Naive thymus-derived CD4-positive, alpha-beta T cell (primary cell): ENCODE measurements at regions of chr6 and their contacts with region 1.

Region 1: DNA sequence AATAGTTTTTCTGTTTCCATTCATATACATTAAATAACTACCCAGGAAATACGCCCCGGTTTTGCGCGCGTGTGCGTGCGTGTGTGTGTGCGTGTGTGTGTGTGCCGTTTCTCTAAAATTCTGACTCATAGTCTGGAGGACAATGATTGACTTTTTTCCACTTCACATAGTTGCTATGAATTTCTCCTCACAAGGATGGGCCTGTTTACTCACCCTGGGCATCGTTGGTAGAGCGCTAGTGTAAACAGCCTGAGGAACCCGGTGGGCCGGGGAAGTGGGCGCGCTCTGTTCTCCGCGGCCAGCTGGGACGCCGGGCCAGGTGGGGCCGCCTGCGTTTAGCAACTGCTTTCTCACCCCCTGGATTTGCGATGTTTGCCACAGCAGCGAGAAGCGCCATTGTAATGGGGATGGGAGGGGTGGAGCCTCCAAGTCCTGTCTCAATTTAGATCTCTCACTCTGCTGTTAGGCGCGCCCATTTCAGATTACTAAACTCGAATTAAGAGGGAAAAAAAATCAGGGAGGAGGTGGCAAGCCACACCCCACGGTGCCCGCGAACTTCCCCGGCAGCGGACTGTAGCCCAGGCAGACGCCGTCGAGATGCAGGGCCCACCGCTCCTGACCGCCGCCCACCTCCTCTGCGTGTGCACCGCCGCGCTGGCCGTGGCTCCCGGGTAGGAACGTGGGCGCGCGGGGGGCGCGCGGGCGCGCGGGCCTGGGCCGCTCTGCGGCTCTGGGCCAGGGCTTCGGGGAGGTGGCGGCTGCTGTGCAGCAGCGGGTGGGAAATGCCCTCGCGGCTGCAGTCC is at the start of gene CD109:
- DNase-seq: peak; percentile 15 to 81 (median 48)
- ATAC-seq: peak; percentile 75
- H3K4me3 ChIP-seq: peak within 1 kb of the TSS; percentile 61
- H3K4me3 Mint-ChIP-seq: peak within 1 kb of the TSS; percentile 84 to 94 (median 90)
- H3K27ac ChIP-seq: peak within 1 kb of the TSS; percentile 49
- H3K27ac Mint-ChIP-seq: peak within 1 kb of the TSS; percentile 23 to 94 (median 87)
- H3K4me1 ChIP-seq: peaks cover 0 to 6% of the 10 kb centered on the region in 2 donors
- H3K4me1 Mint-ChIP-seq: peaks cover 5 to 43% (median 25%) of the 10 kb centered on the region in 7 donors
- H3K27me3 ChIP-seq: no peaks in the 10 kb centered on the region
- H3K27me3 Mint-ChIP-seq: peaks cover 0 to 33% (median 24%) of the 10 kb centered on the region in 5 donors
- total RNA-seq, gene CD109: 0.54 to 12.3 (median 1.2) TPM

Region 2: DNA sequence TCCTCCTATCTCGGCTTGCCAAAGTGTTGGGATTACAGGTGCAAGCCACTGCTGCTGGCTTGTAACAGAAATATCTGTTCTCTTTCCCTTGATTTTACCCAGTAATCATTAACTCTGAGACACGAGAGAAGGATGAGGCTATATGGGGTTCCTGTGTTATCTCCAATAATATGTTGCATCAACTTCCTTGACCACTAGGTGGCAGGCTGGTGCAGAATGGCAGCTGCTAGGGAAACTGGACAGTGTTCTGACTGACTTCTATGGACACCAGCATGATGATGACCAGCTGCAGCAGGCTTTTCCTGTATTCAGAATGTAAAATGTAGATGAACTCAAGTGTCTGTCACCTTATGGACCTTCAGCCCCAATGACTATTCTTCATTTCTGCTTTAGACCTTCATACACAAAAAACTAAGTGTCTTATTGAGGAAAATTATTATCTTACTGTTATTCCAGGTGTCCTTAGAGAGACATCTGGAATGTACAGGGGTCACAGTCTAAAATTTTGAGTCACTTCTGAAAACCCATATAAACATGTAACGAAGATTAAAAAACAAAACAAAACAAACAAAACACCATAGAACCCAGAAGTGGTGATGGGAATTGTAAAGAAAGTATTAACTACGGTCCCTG is 20.2 kb before region 1 on chr6:
- CTCF ChIA-PET with region 1: no interaction called
- POLR2A ChIA-PET with region 1: interaction called, 3 read pairs
- intact Hi-C with region 1: loop called in 1 of 2 experiments (anchors 1 kb)
- DNase-seq: peak; percentile 31 to 74 (median 59)
- ATAC-seq: peak; percentile 92
- H3K4me3 ChIP-seq: no peak overlapping the region
- H3K4me3 Mint-ChIP-seq: no peak overlapping the region
- H3K27ac ChIP-seq: no peak overlapping the region
- H3K27ac Mint-ChIP-seq: no peak overlapping the region
- H3K4me1 ChIP-seq: no peaks in the 10 kb centered on the region
- H3K4me1 Mint-ChIP-seq: peaks cover 0 to 4% (median 0%) of the 10 kb centered on the region in 7 donors
- H3K27me3 ChIP-seq: no peaks in the 10 kb centered on the region
- H3K27me3 Mint-ChIP-seq: peaks cover 4 to 23% (median 21%) of the 10 kb centered on the region in 5 donors

Region 3: GRCh38 chr6:73774311-73774787 is 78.5 kb after region 1 on chr6:
- CTCF ChIA-PET with region 1: no interaction called
- POLR2A ChIA-PET with region 1: no interaction called
- intact Hi-C with region 1: no loop called
- DNase-seq: no peak
- ATAC-seq: no peak
- H3K4me3 ChIP-seq: no peak overlapping the region
- H3K4me3 Mint-ChIP-seq: no peak overlapping the region
- H3K27ac ChIP-seq: no peak overlapping the region
- H3K27ac Mint-ChIP-seq: no peak overlapping the region
- H3K4me1 ChIP-seq: no peaks in the 10 kb centered on the region
- H3K4me1 Mint-ChIP-seq: no peaks in the 10 kb centered on the region
- H3K27me3 ChIP-seq: no peaks in the 10 kb centered on the region
- H3K27me3 Mint-ChIP-seq: no peaks in the 10 kb centered on the region